ENCODE measurements at regions of chr2 and their contacts with region 1.

Region 1: DNA sequence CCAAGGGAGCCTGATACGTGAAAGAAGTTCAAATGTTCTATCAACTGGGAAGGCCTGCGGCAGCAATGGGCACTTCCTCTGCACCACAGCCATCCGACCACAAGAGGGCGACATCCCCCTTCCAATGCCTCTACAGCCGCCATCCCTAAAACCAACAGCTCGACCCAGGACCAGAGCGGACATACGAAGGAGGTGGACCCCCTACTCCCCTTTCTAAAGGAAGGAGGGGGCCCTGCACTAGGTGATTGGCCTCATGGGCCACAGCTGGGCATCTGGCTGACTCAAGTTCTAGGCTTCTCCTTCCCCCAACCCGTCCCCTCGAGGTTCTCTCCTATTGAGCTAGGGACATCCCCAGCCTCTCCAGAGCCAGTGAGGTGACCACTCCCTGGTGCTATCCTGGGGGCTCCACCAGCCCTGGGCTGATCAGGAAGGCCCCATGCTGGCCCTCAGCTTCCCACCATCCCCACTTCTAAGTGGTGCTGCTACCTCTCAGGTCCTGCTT is 217.2 kb downstream of the TNS1 start:
- DNase-seq: peak; percentile 81
- ATAC-seq: peak; percentile 89
- H3K4me3 ChIP-seq: no peak overlapping the region
- H3K27ac ChIP-seq: no peak overlapping the region
- H3K4me1 ChIP-seq: no peaks in the 10 kb centered on the region
- H3K27me3 ChIP-seq: peaks cover 15% of the 10 kb centered on the region; the same call in 1 of the 2 replicates
- CTCF ChIP-seq: peak; percentile 95

Region 2: GRCh38 chr2:217886720-217887309 is 101.2 kb after region 1 on chr2:
- CTCF ChIA-PET with region 1: interaction called, 5 read pairs
- POLR2A ChIA-PET with region 1: no interaction called
- intact Hi-C with region 1: loop called (anchors 1 kb)
- DNase-seq: peak; percentile 76
- ATAC-seq: peak; percentile 73
- H3K4me3 ChIP-seq: no peak overlapping the region
- H3K27ac ChIP-seq: no peak overlapping the region
- H3K4me1 ChIP-seq: no peaks in the 10 kb centered on the region
- H3K27me3 ChIP-seq: peaks cover 40% of the 10 kb centered on the region
- CTCF ChIP-seq: peak; percentile 79

Region 3: DNA sequence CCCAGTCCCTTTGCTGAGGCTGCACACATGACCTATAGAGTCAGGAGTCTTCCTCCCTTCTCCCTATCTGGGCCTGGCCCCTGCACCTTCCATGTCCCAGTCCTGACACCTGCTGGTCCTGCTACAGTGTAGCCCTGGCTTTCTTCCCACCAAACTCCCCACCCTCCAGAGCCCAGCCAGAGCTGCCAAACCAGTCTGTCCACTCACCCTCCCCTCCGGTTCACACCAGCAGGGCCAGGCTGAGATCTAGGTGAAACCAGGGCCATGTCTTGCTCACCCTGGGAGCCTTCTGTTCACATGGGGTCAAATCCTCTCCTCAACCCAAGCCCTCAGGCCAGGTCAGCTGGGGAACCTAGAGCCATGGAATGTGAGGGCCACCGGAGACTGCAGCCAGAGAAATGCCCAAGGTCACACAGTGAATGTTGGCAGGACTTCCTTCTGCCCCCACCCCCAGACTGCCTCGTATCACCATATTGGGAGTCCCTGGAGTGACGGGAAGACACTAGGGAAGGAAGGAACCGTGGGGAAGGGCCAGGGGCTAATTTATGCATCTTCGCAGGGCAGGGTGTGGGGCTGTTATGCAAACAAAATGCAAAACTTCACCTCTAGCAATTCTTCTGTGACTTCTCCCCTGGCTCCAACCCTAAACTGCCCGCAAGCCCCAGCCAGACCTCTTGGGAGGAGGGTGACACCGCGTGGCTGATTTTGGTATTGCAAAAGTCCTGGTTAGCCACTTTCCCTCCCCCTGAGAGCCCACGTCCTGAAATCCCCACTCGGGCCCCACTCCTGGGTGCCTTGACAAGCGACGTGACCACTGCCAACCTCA is 202.6 kb after region 1 on chr2:
- CTCF ChIA-PET with region 1: no interaction called
- POLR2A ChIA-PET with region 1: no interaction called
- intact Hi-C with region 1: loop called (anchors 1 kb)
- DNase-seq: peak; percentile 91
- ATAC-seq: peak; percentile 75
- H3K4me3 ChIP-seq: peak overlapping the region; percentile 35; the same call in 1 of the 2 replicates
- H3K27ac ChIP-seq: no peak overlapping the region
- H3K4me1 ChIP-seq: peaks cover 7% of the 10 kb centered on the region
- H3K27me3 ChIP-seq: no peaks in the 10 kb centered on the region
- CTCF ChIP-seq: peak; percentile 76

Region 4: GRCh38 chr2:218033590-218034496 is 248.2 kb after region 1 on chr2:
- CTCF ChIA-PET with region 1: interaction called, 8 read pairs
- POLR2A ChIA-PET with region 1: no interaction called
- intact Hi-C with region 1: loop called (anchors 2 kb)
- DNase-seq: no peak
- ATAC-seq: no peak
- H3K4me3 ChIP-seq: no peak overlapping the region
- H3K27ac ChIP-seq: no peak overlapping the region
- H3K4me1 ChIP-seq: no peaks in the 10 kb centered on the region
- H3K27me3 ChIP-seq: peaks cover 11% of the 10 kb centered on the region
- CTCF ChIP-seq: no peak

Measured in PC-3 (cell line).